Activated T-helper 1 cell treated with anti-CD3 and anti-CD28 coated beads, Interleukin-12 subunit alpha, Interleukin-12 subunit beta, Interleukin-2, Interleukin-4 antibody, amounts not matched to agents 30 ng/mL and 10 ng/mL and 1 ng/mL, durations not matched to agents 14 hours and 24 hours and 36 hours (primary cell): ENCODE measurements at regions of chr4 and their contacts with region 1.

Region 1: GRCh38 chr4:141246243-141246642 is 25.5 kb downstream of the ZNF330 start:
- DNase-seq: no peak
- H3K4me3 Mint-ChIP-seq: peak overlapping the region; percentile 57
- H3K27ac Mint-ChIP-seq: peak overlapping the region; percentile 77
- H3K4me1 Mint-ChIP-seq: peaks cover 16% of the 10 kb centered on the region
- H3K27me3 Mint-ChIP-seq: peaks cover 2% of the 10 kb centered on the region

Region 2: GRCh38 chr4:141220655-141221605 is 25.3 kb before region 1 on chr4 and contains the start of gene ZNF330:
- intact Hi-C with region 1: loop called (anchors 1 kb)
- DNase-seq: peak; percentile 83
- H3K4me3 Mint-ChIP-seq: peak within 1 kb of the TSS; percentile 93
- H3K27ac Mint-ChIP-seq: peak within 1 kb of the TSS; percentile 98
- H3K4me1 Mint-ChIP-seq: peaks cover 47% of the 10 kb centered on the region
- H3K27me3 Mint-ChIP-seq: peaks cover 6% of the 10 kb centered on the region
- total RNA-seq, gene ZNF330: 57.8 and 62.9 TPM in 2 replicates

Region 3: GRCh38 chr4:141301216-141301615 is 55.0 kb after region 1 on chr4:
- intact Hi-C with region 1: no loop called
- DNase-seq: no peak
- H3K4me3 Mint-ChIP-seq: no peak overlapping the region
- H3K27ac Mint-ChIP-seq: no peak overlapping the region
- H3K4me1 Mint-ChIP-seq: no peaks in the 10 kb centered on the region
- H3K27me3 Mint-ChIP-seq: peaks cover 2% of the 10 kb centered on the region

Region 4: DNA sequence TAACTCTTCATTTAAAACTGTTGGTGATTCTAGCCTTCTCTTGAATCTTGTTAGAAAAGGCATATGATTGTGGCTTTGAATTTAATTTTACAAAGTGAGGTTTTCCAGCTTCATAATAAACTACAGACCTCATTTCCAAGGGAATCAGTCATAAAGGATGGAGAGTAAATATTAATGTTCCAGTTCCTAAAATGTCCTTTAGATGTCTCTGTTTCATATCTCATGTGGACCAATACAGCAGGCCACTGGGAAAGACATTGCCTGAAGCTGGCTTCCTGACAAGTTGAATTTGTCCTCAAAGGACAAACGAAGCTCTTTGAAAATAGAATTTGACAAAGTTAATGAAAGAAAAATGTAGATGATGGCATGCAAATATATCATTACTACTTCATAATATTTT is 99.9 kb after region 1 on chr4:
- intact Hi-C with region 1: no loop called
- DNase-seq: no peak
- H3K4me3 Mint-ChIP-seq: no peak overlapping the region
- H3K27ac Mint-ChIP-seq: no peak overlapping the region
- H3K4me1 Mint-ChIP-seq: no peaks in the 10 kb centered on the region
- H3K27me3 Mint-ChIP-seq: no peaks in the 10 kb centered on the region